HepG2 (cell line): ENCODE measurements at regions of chr16 and their contacts with region 1.

Region 1: DNA sequence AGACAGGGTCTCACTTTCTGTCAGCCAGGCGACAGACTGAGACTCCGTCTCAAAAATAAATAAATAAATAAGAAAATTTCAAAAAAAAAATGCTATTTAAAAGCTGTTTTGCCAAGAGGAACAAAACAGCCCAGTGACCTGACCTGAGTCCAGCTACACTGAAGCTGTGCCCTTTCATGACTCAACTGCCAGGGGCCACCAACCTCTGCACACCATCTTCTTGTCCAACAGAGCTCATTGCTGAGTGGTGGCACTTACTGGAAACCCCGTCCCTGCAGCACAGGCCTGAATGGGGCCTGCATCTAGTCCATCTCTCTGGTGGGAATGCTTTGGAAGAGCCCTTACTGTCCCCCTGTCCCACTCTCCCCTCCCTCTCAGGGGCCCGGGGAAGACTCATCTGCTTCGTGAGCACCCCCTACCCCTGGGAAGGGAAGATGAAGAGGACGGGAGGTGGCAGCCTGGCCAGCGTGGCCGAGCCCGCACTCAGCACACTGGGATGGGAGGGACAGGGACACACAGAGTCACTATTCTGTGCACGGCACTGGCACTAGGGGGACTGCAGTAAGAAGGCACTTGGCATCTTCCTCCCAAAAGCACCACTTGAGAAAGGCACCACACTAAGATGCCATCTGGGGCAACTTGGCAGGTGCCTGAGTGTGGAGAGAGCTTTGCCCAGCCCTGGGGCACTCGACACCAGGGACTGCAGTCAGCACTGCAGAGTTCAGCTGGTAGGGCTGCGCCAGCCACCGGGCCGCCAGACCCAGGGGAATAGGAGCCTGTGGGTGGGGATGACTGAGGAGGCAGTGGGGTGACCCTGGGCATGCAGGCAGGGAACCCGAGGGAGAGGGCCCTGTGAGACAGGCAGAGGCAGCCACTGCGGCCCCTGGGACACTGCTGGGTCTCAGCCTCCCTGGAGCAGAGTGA is 13.5 kb downstream of the FBXO31 start:
- DNase-seq: no peak
- ATAC-seq: peak; percentile 22
- H3K4me3 ChIP-seq: no peak overlapping the region
- H3K27ac ChIP-seq: no peak overlapping the region
- H3K4me1 ChIP-seq: peaks cover 86% of the 10 kb centered on the region
- H3K27me3 ChIP-seq: no peaks in the 10 kb centered on the region
- CTCF ChIP-seq: no peak
- EP300 ChIP-seq: no peak
- POLR2A ChIP-seq: 0 out of 4 replicates have a peak, but pooled peaks of 1 of the 2 experiments have one; percentile 25
- RAD21 ChIP-seq: no peak

Region 2: GRCh38 chr16:87350681-87351319 is 19.3 kb before region 1 on chr16:
- CTCF ChIA-PET with region 1: no interaction called
- POLR2A ChIA-PET with region 1: interaction called, 265 read pairs
- in situ Hi-C with region 1: no loop called
- intact Hi-C with region 1: loop called (anchors 2 kb)
- DNase-seq: no peak
- ATAC-seq: no peak
- H3K4me3 ChIP-seq: no peak overlapping the region
- H3K27ac ChIP-seq: peak overlapping the region; percentile 6
- H3K4me1 ChIP-seq: peaks cover 17% of the 10 kb centered on the region
- H3K27me3 ChIP-seq: no peaks in the 10 kb centered on the region
- CTCF ChIP-seq: no peak
- EP300 ChIP-seq: no peak
- POLR2A ChIP-seq: no peak; a peak in 1 of 4 replicates
- RAD21 ChIP-seq: no peak